ENCODE measurements at regions of chr17 and their contacts with region 1.

Region 1: DNA sequence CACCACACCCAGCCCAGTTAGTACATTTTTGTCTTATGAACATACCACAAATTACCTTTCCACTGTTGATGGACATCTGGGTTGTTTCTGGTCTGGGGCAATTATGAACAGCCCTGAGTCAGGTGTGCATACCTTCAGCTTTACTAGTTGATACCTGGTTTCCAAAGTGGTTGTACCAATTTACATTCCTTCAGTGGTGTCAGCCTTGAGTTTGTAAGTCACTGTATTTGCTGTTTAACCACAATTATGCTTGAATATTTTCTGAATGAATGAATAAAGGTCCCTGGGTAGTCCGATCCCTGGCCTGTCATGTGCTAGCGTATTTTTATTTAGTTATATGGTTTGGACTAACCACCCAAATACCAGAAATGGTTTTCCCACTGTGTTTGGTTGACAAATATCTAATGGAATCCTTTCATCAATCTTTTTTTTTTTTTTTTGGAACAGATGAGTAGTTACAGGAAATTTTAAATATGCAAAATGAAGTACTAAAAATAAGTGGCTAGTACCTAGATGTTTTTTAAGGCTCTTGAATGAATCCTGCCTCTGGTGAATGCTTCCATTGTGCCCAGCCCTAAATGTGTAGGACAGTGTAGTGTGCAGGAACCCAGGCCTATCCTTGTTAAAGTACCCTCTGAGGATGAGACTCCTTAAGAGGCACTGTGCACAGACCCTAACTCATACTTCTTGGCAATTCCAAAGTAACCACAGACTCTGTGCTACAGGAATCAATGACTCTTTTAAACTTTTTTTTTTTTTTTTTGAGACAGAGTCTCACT is 3.7 kb downstream of the DUSP14 start:
- DNase-seq: no peak
- ATAC-seq: no peak
- H3K4me3 Mint-ChIP-seq: no peak overlapping the region
- H3K27ac Mint-ChIP-seq: no peak overlapping the region
- H3K4me1 Mint-ChIP-seq: peaks cover 45% of the 10 kb centered on the region
- H3K27me3 Mint-ChIP-seq: no peaks in the 10 kb centered on the region
- CTCF ChIP-seq: no peak

Region 2: GRCh38 chr17:37179893-37180292 is 313.5 kb before region 1 on chr17:
- CTCF ChIA-PET with region 1: no interaction called
- POLR2A ChIA-PET with region 1: no interaction called
- DNase-seq: no peak
- ATAC-seq: no peak
- H3K4me3 Mint-ChIP-seq: no peak overlapping the region
- H3K27ac Mint-ChIP-seq: no peak overlapping the region
- H3K4me1 Mint-ChIP-seq: no peaks in the 10 kb centered on the region
- H3K27me3 Mint-ChIP-seq: no peaks in the 10 kb centered on the region
- CTCF ChIP-seq: no peak

Region 3: GRCh38 chr17:37476431-37477120 is 16.9 kb before region 1 on chr17:
- CTCF ChIA-PET with region 1: no interaction called
- POLR2A ChIA-PET with region 1: no interaction called
- DNase-seq: no peak
- ATAC-seq: no peak
- H3K4me3 Mint-ChIP-seq: no peak overlapping the region
- H3K27ac Mint-ChIP-seq: no peak overlapping the region
- H3K4me1 Mint-ChIP-seq: peaks cover 9% of the 10 kb centered on the region
- H3K27me3 Mint-ChIP-seq: no peaks in the 10 kb centered on the region
- CTCF ChIP-seq: no peak

Region 4: DNA sequence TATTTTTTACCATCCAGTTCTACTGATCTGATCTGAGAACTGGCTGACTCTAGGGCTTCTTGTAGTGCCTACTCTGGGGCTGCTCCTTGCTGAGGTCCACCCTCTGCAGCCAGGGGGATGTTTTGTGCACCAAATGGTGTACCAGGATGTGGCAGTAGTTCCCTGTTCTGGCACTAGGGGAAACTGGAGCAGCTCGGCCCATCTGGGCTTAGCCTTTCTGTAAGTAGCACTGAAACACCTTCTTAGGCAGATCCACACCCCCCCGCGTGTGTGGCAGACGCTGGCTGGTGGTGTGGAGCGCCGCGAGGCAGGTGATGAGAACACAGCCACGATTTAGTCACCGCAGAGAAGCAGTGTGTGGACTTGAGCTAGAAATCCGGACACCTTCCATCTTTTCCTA is 13.2 kb after region 1 on chr17:
- CTCF ChIA-PET with region 1: interaction called, 19 read pairs
- POLR2A ChIA-PET with region 1: no interaction called
- DNase-seq: peak; percentile 79
- ATAC-seq: peak; percentile 99
- H3K4me3 Mint-ChIP-seq: no peak overlapping the region
- H3K27ac Mint-ChIP-seq: peak overlapping the region; percentile 43
- H3K4me1 Mint-ChIP-seq: peaks cover 14% of the 10 kb centered on the region
- H3K27me3 Mint-ChIP-seq: no peaks in the 10 kb centered on the region
- CTCF ChIP-seq: peak; percentile 43; the same call in 1 of the 2 replicates

Measured in WTC11 (cell line).